ENCODE measurements at regions of chr3 and their contacts with region 1.

Region 1: GRCh38 chr3:71652781-71653413 is 69.4 kb upstream of the FOXP1 start:
- DNase-seq: peak; percentile 50
- ATAC-seq: peak; percentile 93
- H3K4me3 ChIP-seq: peak overlapping the region in 1 of 3 experiments; percentile 3; a peak in 1 of 6 replicates
- H3K27ac ChIP-seq: no peak overlapping the region
- H3K4me1 ChIP-seq: 0 out of 2 replicates have a peak, but pooled peaks cover 18% of the 10 kb centered on the region
- H3K27me3 ChIP-seq: peaks cover 0 to 11% of the 10 kb centered on the region in 2 experiments; a peak in 4 of 5 replicates
- CTCF ChIP-seq: peak; percentile 79
- EP300 ChIP-seq: no peak
- POLR2A ChIP-seq: no peak
- RAD21 ChIP-seq: peak; percentile 74

Region 2: GRCh38 chr3:70064194-70064779 is 1588.6 kb before region 1 on chr3:
- CTCF ChIA-PET with region 1: interaction called, 9 read pairs
- POLR2A ChIA-PET with region 1: no interaction called
- in situ Hi-C with region 1: loop called (anchors 10 kb)
- intact Hi-C with region 1: loop called (anchors 2 kb)
- DNase-seq: peak; percentile 27
- ATAC-seq: no peak
- H3K4me3 ChIP-seq: no peak overlapping the region
- H3K27ac ChIP-seq: no peak overlapping the region
- H3K4me1 ChIP-seq: no peaks in the 10 kb centered on the region
- H3K27me3 ChIP-seq: no peaks in the 10 kb centered on the region
- CTCF ChIP-seq: peak; percentile 71
- EP300 ChIP-seq: no peak
- POLR2A ChIP-seq: no peak
- RAD21 ChIP-seq: peak; percentile 45; the same call in 1 of the 2 replicates

Region 3: GRCh38 chr3:70531063-70531657 is 1121.7 kb before region 1 on chr3:
- CTCF ChIA-PET with region 1: interaction called, 10 read pairs
- POLR2A ChIA-PET with region 1: no interaction called
- in situ Hi-C with region 1: no loop called
- intact Hi-C with region 1: loop called (anchors 1 kb)
- DNase-seq: peak; percentile 4
- ATAC-seq: no peak
- H3K4me3 ChIP-seq: no peak overlapping the region
- H3K27ac ChIP-seq: no peak overlapping the region
- H3K4me1 ChIP-seq: no peaks in the 10 kb centered on the region
- H3K27me3 ChIP-seq: peaks cover 0 to 1% of the 10 kb centered on the region in 2 experiments; a peak in 1 of 5 replicates
- CTCF ChIP-seq: peak; percentile 44
- EP300 ChIP-seq: no peak
- POLR2A ChIP-seq: no peak
- RAD21 ChIP-seq: no peak

Region 4: DNA sequence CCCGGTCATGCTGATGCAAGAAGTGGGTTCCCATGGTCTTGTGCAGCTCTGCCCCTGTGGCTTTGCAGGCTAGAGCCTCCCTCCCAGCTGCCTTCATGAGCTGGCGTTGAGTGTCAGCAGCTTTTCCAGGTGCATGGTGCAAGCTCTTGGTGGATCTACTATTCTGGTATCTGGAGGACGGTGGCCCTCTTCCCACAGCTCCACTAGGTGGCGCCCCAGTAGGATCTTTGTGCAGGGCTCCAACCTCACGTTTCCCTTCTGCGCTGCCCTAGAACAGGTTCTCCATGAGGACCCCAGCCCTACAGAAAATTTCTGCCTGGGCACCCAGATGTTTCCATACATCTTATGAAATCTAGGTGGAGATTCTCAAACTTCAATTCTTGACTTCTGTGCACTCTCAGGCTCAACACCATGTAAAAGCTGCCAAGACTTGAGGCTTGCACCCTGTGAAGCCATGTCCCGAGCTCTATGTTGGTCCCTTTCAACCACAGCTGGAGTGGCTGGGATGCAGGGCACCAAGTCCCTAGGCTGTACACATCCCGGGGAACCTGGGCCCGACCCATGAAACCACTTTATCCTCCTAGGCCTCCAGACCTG is 1102.1 kb before region 1 on chr3:
- CTCF ChIA-PET with region 1: interaction called, 12 read pairs
- POLR2A ChIA-PET with region 1: no interaction called
- in situ Hi-C with region 1: loop called (anchors 5 kb)
- intact Hi-C with region 1: loop called (anchors 1 kb)
- DNase-seq: peak; percentile 42
- ATAC-seq: peak; percentile 98
- H3K4me3 ChIP-seq: no peak overlapping the region
- H3K27ac ChIP-seq: no peak overlapping the region
- H3K4me1 ChIP-seq: no peaks in the 10 kb centered on the region
- H3K27me3 ChIP-seq: 0 out of 5 replicates have a peak, but pooled peaks cover 0 to 3% of the 10 kb centered on the region in 2 experiments
- CTCF ChIP-seq: peak; percentile 81
- EP300 ChIP-seq: no peak
- POLR2A ChIP-seq: no peak
- RAD21 ChIP-seq: peak; percentile 43; the same call in 1 of the 2 replicates

Region 5: DNA sequence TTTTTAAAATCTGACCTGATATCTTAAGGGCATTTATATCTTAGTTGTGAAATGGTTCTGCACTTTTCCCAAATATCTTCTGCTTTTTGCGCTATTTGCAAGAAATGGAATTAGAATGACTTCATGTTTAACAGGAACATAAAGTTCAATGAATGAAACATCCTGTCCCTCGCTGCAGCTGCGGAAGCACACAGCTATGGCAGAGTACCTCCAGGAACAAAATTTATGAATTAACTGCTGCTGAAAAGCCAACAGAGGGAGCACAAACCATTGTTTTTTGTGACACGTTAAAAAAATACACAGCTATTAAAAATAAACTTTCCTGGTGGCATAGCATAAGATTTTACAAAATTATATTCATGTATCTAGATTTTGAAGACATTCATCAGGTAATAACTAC is 936.1 kb before region 1 on chr3:
- CTCF ChIA-PET with region 1: no interaction called
- POLR2A ChIA-PET with region 1: no interaction called
- in situ Hi-C with region 1: no loop called
- intact Hi-C with region 1: loop called (anchors 5 kb)
- DNase-seq: no peak
- ATAC-seq: no peak
- H3K4me3 ChIP-seq: no peak overlapping the region
- H3K27ac ChIP-seq: no peak overlapping the region
- H3K4me1 ChIP-seq: no peaks in the 10 kb centered on the region
- H3K27me3 ChIP-seq: no peaks in the 10 kb centered on the region
- CTCF ChIP-seq: peak; percentile 22; the same call in 1 of the 2 replicates
- EP300 ChIP-seq: no peak
- POLR2A ChIP-seq: no peak
- RAD21 ChIP-seq: no peak

Region 6: GRCh38 chr3:71006810-71007785 is 645.8 kb before region 1 on chr3:
- CTCF ChIA-PET with region 1: no interaction called
- POLR2A ChIA-PET with region 1: no interaction called
- in situ Hi-C with region 1: no loop called
- intact Hi-C with region 1: loop called (anchors 5 kb)
- DNase-seq: peak; percentile 20
- ATAC-seq: peak; percentile 75
- H3K4me3 ChIP-seq: no peak overlapping the region
- H3K27ac ChIP-seq: no peak overlapping the region
- H3K4me1 ChIP-seq: peaks cover 49% of the 10 kb centered on the region
- H3K27me3 ChIP-seq: no peaks in the 10 kb centered on the region
- CTCF ChIP-seq: peak; percentile 53
- EP300 ChIP-seq: no peak
- POLR2A ChIP-seq: no peak
- RAD21 ChIP-seq: peak; percentile 33; the same call in 1 of the 2 replicates

Region 7: GRCh38 chr3:71784914-71785531 is 132.1 kb after region 1 on chr3 and contains the start of gene PROK2:
- CTCF ChIA-PET with region 1: no interaction called
- POLR2A ChIA-PET with region 1: no interaction called
- in situ Hi-C with region 1: no loop called
- intact Hi-C with region 1: no loop called
- DNase-seq: no peak
- ATAC-seq: no peak; the same call in 2 of the 3 replicates
- H3K4me3 ChIP-seq: peak within 1 kb of the TSS in 1 of 3 experiments; percentile 23; a peak in 1 of 6 replicates
- H3K27ac ChIP-seq: no peak within 1 kb of the TSS
- H3K4me1 ChIP-seq: no peaks in the 10 kb centered on the region
- H3K27me3 ChIP-seq: peaks cover 2 to 39% of the 10 kb centered on the region in 2 experiments; a peak in 3 of 5 replicates
- CTCF ChIP-seq: no peak
- EP300 ChIP-seq: no peak
- POLR2A ChIP-seq: no peak
- RAD21 ChIP-seq: no peak
- total RNA-seq, gene PROK2: not detected in 2 replicates

Measured in HepG2 (cell line).